ENCODE measurements at regions of chr5 and their contacts with region 1.

Region 1: DNA sequence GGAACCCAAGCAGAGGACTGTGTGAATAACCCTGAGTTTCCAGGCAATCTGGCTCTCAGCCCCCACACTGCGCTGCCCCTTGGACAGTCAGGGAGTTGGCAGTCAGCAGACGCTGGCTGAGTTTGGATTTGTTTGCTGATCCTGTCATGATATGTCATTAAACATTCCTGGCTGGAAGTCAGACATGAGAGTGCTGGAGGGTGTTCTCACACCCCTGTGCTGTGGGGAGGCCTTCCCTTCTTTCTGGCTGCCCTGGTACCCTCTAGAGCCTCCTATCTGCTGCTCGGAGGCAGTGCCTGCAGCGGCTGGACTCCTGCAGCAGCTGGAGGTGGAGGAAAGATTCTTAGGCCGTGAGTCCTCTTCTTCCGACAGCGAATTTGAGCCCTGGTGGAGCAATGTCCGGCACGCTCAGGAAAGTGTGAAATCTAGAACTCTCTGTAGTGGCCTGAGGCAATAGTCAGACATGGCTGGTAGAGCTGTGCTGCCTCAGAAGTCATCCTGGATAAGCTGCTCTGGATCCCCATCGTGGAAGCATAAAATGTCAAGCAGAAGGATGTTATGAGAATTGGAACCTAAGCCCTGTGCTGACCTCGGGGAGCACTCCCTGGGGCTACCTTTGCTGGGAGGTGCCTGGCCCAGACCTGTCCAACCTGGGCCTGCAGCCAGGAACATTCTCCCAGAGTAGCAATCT is 72.0 kb downstream of the PDE8B start:
- DNase-seq: peak; percentile 69
- H3K4me3 ChIP-seq: no peak overlapping the region
- H3K27ac ChIP-seq: peak overlapping the region; percentile 77
- H3K27me3 ChIP-seq: no peaks in the 10 kb centered on the region
- CTCF ChIP-seq: peak; percentile 75

Region 2: DNA sequence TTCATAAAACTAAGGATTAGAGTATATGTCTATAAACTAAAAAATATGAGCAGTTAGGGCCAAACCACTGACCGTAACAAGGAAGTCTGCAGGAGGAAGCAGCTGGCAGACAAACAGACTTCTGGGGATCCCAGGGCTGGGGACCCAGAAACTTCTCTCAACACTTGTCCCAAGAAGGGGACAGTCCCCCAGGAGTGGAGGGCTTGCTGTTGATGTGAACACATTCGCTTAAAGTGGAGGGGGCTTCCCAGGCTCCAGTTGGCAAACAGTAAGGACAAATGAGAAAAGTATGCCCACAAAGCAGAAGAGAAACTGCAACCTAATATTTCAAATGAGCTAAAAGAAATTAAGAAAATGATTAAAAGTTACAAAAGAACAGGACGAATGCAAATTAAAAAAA is 11.7 kb after region 1 on chr5:
- CTCF ChIA-PET with region 1: interaction called, 11 read pairs
- POLR2A ChIA-PET with region 1: interaction called, 4 read pairs
- DNase-seq: no peak
- H3K4me3 ChIP-seq: no peak overlapping the region
- H3K27ac ChIP-seq: no peak overlapping the region
- H3K27me3 ChIP-seq: no peaks in the 10 kb centered on the region
- CTCF ChIP-seq: no peak